ENCODE measurements at regions of chr3 and their contacts with region 1.

Region 1: GRCh38 chr3:122392868-122393844 is 9.2 kb downstream of the FAM162A start:
- DNase-seq: peak; percentile 66
- ATAC-seq: no peak
- H3K4me3 ChIP-seq: no peak overlapping the region
- H3K4me3 Mint-ChIP-seq: no peak overlapping the region
- H3K27ac ChIP-seq: no peak overlapping the region
- H3K27ac Mint-ChIP-seq: no peak overlapping the region
- H3K4me1 ChIP-seq: no peaks in the 10 kb centered on the region
- H3K4me1 Mint-ChIP-seq: peaks cover 13% of the 10 kb centered on the region
- H3K27me3 ChIP-seq: no peaks in the 10 kb centered on the region
- H3K27me3 Mint-ChIP-seq: no peaks in the 10 kb centered on the region
- CTCF ChIP-seq: peak; percentile 94

Region 2: GRCh38 chr3:122052968-122053367 is 340.2 kb before region 1 on chr3:
- CTCF ChIA-PET with region 1: no interaction called
- POLR2A ChIA-PET with region 1: no interaction called
- intact Hi-C with region 1: no loop called
- DNase-seq: peak; percentile 81
- ATAC-seq: peak; percentile 77
- H3K4me3 ChIP-seq: no peak overlapping the region
- H3K4me3 Mint-ChIP-seq: peak overlapping the region; percentile 62
- H3K27ac ChIP-seq: no peak overlapping the region
- H3K27ac Mint-ChIP-seq: peak overlapping the region; percentile 59
- H3K4me1 ChIP-seq: peaks cover 24 to 26% of the 10 kb centered on the region in 2 donors
- H3K4me1 Mint-ChIP-seq: peaks cover 31% of the 10 kb centered on the region
- H3K27me3 ChIP-seq: no peaks in the 10 kb centered on the region
- H3K27me3 Mint-ChIP-seq: no peaks in the 10 kb centered on the region
- CTCF ChIP-seq: no peak

Region 3: GRCh38 chr3:122409446-122409845 is 16.3 kb after region 1 on chr3:
- CTCF ChIA-PET with region 1: interaction called, 18 read pairs
- POLR2A ChIA-PET with region 1: no interaction called
- intact Hi-C with region 1: no loop called
- DNase-seq: peak; percentile 73
- ATAC-seq: peak; percentile 41
- H3K4me3 ChIP-seq: peak overlapping the region in 4 of 5 experiments; percentile 31 to 57 (median 34)
- H3K4me3 Mint-ChIP-seq: peak overlapping the region; percentile 73
- H3K27ac ChIP-seq: peak overlapping the region; percentile 73 to 87
- H3K27ac Mint-ChIP-seq: peak overlapping the region; percentile 92
- H3K4me1 ChIP-seq: peaks cover 17 to 34% of the 10 kb centered on the region in 2 donors
- H3K4me1 Mint-ChIP-seq: peaks cover 40% of the 10 kb centered on the region
- H3K27me3 ChIP-seq: no peaks in the 10 kb centered on the region
- H3K27me3 Mint-ChIP-seq: no peaks in the 10 kb centered on the region
- CTCF ChIP-seq: no peak

Region 4: GRCh38 chr3:122458992-122459391 is 65.8 kb after region 1 on chr3:
- CTCF ChIA-PET with region 1: interaction called, 11 read pairs
- POLR2A ChIA-PET with region 1: no interaction called
- intact Hi-C with region 1: loop called (anchors 10 kb)
- DNase-seq: peak; percentile 19
- ATAC-seq: no peak
- H3K4me3 ChIP-seq: no peak overlapping the region
- H3K4me3 Mint-ChIP-seq: no peak overlapping the region
- H3K27ac ChIP-seq: no peak overlapping the region
- H3K27ac Mint-ChIP-seq: no peak overlapping the region
- H3K4me1 ChIP-seq: no peaks in the 10 kb centered on the region
- H3K4me1 Mint-ChIP-seq: no peaks in the 10 kb centered on the region
- H3K27me3 ChIP-seq: no peaks in the 10 kb centered on the region
- H3K27me3 Mint-ChIP-seq: no peaks in the 10 kb centered on the region
- CTCF ChIP-seq: peak; percentile 49